ENCODE measurements at regions of chr9 and their contacts with region 1.

Region 1: DNA sequence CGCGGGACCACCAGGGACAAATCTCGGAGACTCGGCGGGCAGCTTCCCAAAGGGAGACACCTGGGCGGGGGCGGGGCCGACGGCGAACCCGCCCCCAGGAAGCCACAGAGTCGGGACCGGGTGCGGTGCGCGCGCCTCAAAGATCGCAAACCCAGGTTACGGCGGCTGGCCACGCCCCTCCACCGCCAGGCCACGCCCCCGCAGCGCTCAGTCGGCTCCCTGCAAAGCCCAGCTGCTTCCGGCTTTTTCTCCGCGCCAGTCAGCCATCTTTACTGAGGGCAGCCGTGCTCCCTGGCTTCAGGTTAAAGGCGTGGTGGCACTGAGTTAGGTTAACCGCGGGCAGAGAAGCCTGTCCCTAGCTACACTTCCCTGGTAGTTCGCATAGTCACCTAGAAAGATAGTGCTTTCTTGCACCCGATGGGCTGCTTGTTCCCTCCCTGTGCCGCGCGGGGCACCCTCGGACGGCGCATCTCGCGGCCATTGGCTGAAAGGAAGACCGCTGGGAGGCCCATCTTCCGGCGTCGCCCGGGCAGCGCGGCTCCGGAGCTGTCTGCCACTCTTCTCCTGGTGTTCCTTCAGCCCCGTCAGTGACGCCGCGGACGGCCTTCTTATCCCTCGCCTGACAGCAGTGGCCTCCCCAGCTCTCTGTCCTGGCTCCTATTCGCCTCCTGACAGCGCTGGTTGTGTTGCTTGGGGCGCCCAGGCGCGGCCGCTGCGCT is at the start of gene TBC1D2:
- DNase-seq: peak; percentile 85
- ATAC-seq: peak; percentile 93
- H3K4me3 ChIP-seq: peak within 1 kb of the TSS; percentile 88 to 92 (median 89)
- H3K27ac ChIP-seq: peak within 1 kb of the TSS; percentile 87
- H3K4me1 ChIP-seq: peaks cover 29% of the 10 kb centered on the region
- H3K27me3 ChIP-seq: no peaks in the 10 kb centered on the region; a peak in 1 of 5 replicates
- CTCF ChIP-seq: peak; percentile 27; the same call in 1 of the 2 replicates
- EP300 ChIP-seq: peak in 1 of 2 experiments; percentile 11; a peak in 1 of 4 replicates
- POLR2A ChIP-seq: peak; percentile 52 to 80; a peak in 3 of 4 replicates
- RAD21 ChIP-seq: no peak; the same call in 1 of the 2 replicates
- total RNA-seq, gene TBC1D2: 2.2 and 2.8 TPM in 2 replicates

Region 2: GRCh38 chr9:98231770-98232478 is 23.8 kb before region 1 on chr9:
- CTCF ChIA-PET with region 1: no interaction called
- POLR2A ChIA-PET with region 1: interaction called, 71 read pairs
- in situ Hi-C with region 1: no loop called
- intact Hi-C with region 1: no loop called
- DNase-seq: no peak
- ATAC-seq: no peak
- H3K4me3 ChIP-seq: no peak overlapping the region
- H3K27ac ChIP-seq: no peak overlapping the region
- H3K4me1 ChIP-seq: peaks cover 45% of the 10 kb centered on the region
- H3K27me3 ChIP-seq: no peaks in the 10 kb centered on the region
- CTCF ChIP-seq: no peak
- EP300 ChIP-seq: no peak
- POLR2A ChIP-seq: no peak
- RAD21 ChIP-seq: no peak

Region 3: DNA sequence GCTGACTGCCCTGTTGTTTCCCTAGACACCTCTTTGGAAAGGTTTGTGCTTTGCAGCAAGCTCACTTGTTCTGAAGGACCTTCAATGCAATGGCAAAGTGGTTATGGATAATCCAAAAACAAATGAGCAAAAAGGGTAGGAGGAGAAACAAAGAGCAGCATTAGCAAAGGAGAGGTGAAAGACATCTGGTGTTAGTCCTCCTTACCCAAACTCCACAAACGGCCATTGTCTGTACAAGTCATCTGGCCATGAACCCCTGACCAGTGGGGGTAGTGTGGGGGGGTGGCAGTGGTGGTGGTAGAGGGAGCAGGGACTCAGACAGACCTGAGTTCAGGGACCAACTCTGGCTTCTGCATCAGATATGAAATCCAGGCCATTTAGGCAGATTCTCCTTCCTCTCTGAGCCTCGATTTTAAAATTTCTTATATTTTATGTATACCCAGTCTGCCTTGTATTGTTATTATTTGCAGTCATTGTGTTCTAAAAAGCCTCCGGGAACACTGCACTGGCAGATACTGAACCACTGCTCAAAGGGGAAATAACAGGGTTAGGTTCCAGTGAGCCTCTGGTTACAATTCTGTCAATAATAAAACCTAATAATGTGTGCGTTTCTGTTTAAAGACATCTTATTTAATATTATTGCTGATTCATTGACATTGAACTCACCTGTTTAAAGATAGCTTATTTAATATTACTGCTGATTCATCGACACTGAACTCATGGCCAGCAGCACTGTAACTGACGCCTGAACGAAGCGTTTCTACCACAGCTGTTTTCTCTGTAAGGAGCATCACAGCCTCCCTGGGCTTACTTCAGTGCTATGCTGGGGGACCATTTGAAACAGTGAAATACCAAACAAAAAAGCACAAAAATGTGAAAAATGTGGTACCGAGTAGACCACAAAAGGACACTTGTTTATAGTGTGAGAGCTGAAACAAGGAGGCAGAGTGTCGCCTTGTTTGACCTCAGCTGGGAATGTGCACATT is 1122.3 kb after region 1 on chr9:
- CTCF ChIA-PET with region 1: no interaction called
- POLR2A ChIA-PET with region 1: no interaction called
- in situ Hi-C with region 1: no loop called
- intact Hi-C with region 1: no loop called
- DNase-seq: peak; percentile 64
- ATAC-seq: peak; percentile 82
- H3K4me3 ChIP-seq: peak overlapping the region in 1 of 3 experiments; percentile 37; a peak in 2 of 6 replicates
- H3K27ac ChIP-seq: peak overlapping the region; percentile 44
- H3K4me1 ChIP-seq: peaks cover 63% of the 10 kb centered on the region
- H3K27me3 ChIP-seq: no peaks in the 10 kb centered on the region
- CTCF ChIP-seq: no peak
- EP300 ChIP-seq: peak in 1 of 2 experiments; percentile 71; a peak in 1 of 4 replicates
- POLR2A ChIP-seq: no peak
- RAD21 ChIP-seq: no peak